ENCODE measurements at regions of chr13 and their contacts with region 1.

Region 1: GRCh38 chr13:49374585-49375290 is 69.1 kb downstream of the CAB39L start:
- DNase-seq: peak; percentile 84
- ATAC-seq: peak; percentile 95
- H3K4me3 ChIP-seq: no peak overlapping the region
- H3K27ac ChIP-seq: no peak overlapping the region
- H3K4me1 ChIP-seq: peaks cover 24% of the 10 kb centered on the region
- H3K27me3 ChIP-seq: no peaks in the 10 kb centered on the region
- CTCF ChIP-seq: no peak

Region 2: GRCh38 chr13:48662226-48662625 is 712.5 kb before region 1 on chr13:
- CTCF ChIA-PET with region 1: no interaction called
- POLR2A ChIA-PET with region 1: no interaction called
- intact Hi-C with region 1: no loop called
- DNase-seq: no peak
- ATAC-seq: no peak
- H3K4me3 ChIP-seq: no peak overlapping the region
- H3K27ac ChIP-seq: no peak overlapping the region
- H3K4me1 ChIP-seq: no peaks in the 10 kb centered on the region
- H3K27me3 ChIP-seq: no peaks in the 10 kb centered on the region
- CTCF ChIP-seq: no peak

Region 3: GRCh38 chr13:49388256-49388655 is 13.5 kb after region 1 on chr13:
- CTCF ChIA-PET with region 1: no interaction called
- POLR2A ChIA-PET with region 1: interaction called, 24 read pairs
- intact Hi-C with region 1: no loop called
- DNase-seq: no peak
- ATAC-seq: no peak
- H3K4me3 ChIP-seq: no peak overlapping the region
- H3K27ac ChIP-seq: no peak overlapping the region
- H3K4me1 ChIP-seq: no peaks in the 10 kb centered on the region
- H3K27me3 ChIP-seq: no peaks in the 10 kb centered on the region
- CTCF ChIP-seq: no peak

Region 4: DNA sequence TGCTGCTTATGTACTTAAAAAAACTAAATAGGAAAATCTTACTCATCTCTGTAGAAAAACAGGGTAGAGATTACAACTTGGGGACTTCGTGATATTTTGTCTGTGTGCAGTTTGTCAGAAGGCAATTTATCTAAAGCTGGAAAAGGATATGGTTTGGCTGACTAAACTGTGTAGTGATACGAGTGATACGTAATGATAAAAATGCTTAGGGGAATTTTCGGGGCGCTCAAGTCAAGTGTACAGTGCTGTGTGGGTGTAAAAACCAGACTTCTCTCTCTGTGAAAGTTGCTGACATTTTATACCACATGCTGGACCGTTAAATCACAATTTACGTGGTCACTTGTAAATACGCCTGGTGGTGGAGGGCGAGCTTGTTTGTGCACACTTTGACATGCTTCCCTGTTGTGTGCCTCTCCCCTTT is 862.2 kb after region 1 on chr13:
- CTCF ChIA-PET with region 1: no interaction called
- POLR2A ChIA-PET with region 1: no interaction called
- intact Hi-C with region 1: no loop called
- DNase-seq: no peak
- ATAC-seq: no peak
- H3K4me3 ChIP-seq: no peak overlapping the region
- H3K27ac ChIP-seq: no peak overlapping the region
- H3K4me1 ChIP-seq: peaks cover 6% of the 10 kb centered on the region
- H3K27me3 ChIP-seq: no peaks in the 10 kb centered on the region
- CTCF ChIP-seq: no peak

Region 5: DNA sequence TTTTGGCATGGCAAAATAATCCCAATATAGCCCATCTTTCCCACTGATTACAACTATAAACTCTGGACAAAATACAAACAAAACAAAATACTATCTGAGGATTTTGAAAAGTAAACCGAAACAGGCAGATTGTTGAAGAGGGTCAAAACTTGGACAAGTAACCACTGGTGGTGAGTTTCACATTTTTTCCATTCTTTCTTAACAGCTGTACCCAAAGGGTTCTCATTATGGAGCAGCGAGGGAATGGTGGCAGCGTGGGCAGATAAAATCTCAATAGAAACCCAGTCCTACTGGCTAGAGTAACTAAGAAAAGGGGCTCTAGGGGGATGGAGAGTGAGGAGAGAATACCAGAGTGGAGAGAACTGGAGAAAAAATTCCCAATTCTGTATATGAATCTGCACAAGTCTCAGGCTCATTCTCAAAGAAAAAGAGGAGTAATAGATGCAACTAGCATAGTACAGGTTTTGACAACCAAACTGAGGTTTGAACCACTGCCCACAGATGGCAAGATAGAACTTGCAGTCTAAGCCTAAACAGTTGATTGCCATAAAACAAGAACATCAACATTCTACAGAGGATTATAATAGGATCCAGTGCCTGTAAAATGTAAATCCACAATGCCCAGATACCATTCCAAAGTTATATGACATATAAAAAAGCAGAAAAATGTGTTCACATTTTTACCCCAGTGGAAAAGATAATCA is 925.0 kb after region 1 on chr13:
- CTCF ChIA-PET with region 1: no interaction called
- POLR2A ChIA-PET with region 1: no interaction called
- intact Hi-C with region 1: no loop called
- DNase-seq: no peak
- ATAC-seq: no peak
- H3K4me3 ChIP-seq: no peak overlapping the region
- H3K27ac ChIP-seq: no peak overlapping the region
- H3K4me1 ChIP-seq: no peaks in the 10 kb centered on the region
- H3K27me3 ChIP-seq: no peaks in the 10 kb centered on the region
- CTCF ChIP-seq: no peak